Gastrocnemius medialis (tissue), 4 donors: ENCODE measurements at regions of chr14 and their contacts with region 1.

Region 1: DNA sequence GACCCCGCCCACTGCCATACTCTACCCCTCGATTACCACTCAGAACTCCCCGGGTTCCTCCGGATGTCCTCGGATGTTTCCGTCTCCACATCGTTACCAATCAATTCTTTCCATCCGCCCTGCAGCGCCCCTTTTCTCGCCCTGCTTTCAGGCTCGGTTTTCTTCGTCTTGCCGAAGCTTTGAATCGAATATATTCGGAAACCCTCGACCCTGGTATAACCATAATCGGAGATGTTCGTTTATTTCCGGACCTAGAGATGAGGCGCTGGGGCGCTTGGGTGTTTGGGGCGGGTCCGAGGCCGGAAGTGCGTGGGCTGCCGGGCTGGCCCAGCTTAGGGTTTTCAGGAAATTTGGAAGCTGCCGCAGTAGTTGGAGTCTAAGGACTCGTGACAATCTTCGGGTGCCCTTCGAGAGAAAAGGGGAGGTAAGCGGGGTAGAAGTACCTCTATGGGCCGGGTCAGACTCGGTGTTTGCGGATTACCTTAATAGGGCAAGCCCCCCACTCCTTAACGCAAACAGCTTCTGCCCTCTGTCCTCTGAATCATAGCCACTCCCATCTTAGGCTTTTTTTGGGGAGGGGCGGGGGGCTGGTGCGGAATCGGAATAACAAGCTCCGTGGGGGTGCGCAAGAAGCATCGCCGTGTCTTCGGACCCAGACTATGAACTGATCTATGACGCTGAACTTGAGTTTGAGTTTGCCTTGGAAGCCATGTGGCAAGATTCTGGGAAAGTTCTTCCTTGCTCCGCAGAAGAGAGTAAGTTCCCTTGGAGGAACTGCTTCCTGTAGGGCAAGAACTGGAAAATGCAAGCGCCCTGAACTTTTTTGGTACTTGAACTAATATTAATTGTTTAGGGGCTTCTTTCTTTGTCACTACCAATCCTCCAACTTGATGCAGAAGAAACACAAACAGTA is at the start of gene C14orf119:
- DNase-seq: peak; percentile 100
- ATAC-seq: peak; percentile 96 to 97
- H3K4me3 ChIP-seq: peak within 1 kb of the TSS; percentile 73 to 99 (median 82)
- H3K27ac ChIP-seq: peak within 1 kb of the TSS; percentile 91 to 100 (median 96)
- H3K4me1 ChIP-seq: peaks cover 27 to 32% of the 10 kb centered on the region in 2 donors
- H3K27me3 ChIP-seq: no peaks in the 10 kb centered on the region
- CTCF ChIP-seq: peak in 1 of 5 experiments; percentile 4
- POLR2A ChIP-seq: peak; percentile 56 to 69
- total RNA-seq, gene C14orf119: 9.5 to 28.8 (median 13.8) TPM

Region 2: GRCh38 chr14:23034483-23035302 is 60.8 kb before region 1 on chr14 and contains the start of gene PSMB5:
- in situ Hi-C with region 1: no loop called
- intact Hi-C with region 1: loop called (anchors 2 kb)
- DNase-seq: peak; percentile 89 to 93
- ATAC-seq: peak; percentile 98 to 99
- H3K4me3 ChIP-seq: peak within 1 kb of the TSS; percentile 74 to 97 (median 90)
- H3K27ac ChIP-seq: peak within 1 kb of the TSS; percentile 88 to 99 (median 98)
- H3K4me1 ChIP-seq: peaks cover 12 to 22% of the 10 kb centered on the region in 2 donors
- H3K27me3 ChIP-seq: no peaks in the 10 kb centered on the region
- CTCF ChIP-seq: peak in 1 of 5 experiments; percentile 29
- POLR2A ChIP-seq: peak; percentile 81 to 82
- total RNA-seq, gene PSMB5: 304 to 543 (median 486) TPM

Region 3: GRCh38 chr14:23071244-23071974 is 24.0 kb before region 1 on chr14:
- in situ Hi-C with region 1: no loop called
- intact Hi-C with region 1: loop called (anchors 2 kb)
- DNase-seq: peak; percentile 84 to 90
- ATAC-seq: peak; percentile 92 to 93
- H3K4me3 ChIP-seq: peak overlapping the region; percentile 68 to 81 (median 74)
- H3K27ac ChIP-seq: peak overlapping the region; percentile 88 to 95 (median 90)
- H3K4me1 ChIP-seq: peaks cover 25 to 32% of the 10 kb centered on the region in 2 donors
- H3K27me3 ChIP-seq: no peaks in the 10 kb centered on the region
- CTCF ChIP-seq: no peak
- POLR2A ChIP-seq: peak; percentile 63 to 67

Region 4: DNA sequence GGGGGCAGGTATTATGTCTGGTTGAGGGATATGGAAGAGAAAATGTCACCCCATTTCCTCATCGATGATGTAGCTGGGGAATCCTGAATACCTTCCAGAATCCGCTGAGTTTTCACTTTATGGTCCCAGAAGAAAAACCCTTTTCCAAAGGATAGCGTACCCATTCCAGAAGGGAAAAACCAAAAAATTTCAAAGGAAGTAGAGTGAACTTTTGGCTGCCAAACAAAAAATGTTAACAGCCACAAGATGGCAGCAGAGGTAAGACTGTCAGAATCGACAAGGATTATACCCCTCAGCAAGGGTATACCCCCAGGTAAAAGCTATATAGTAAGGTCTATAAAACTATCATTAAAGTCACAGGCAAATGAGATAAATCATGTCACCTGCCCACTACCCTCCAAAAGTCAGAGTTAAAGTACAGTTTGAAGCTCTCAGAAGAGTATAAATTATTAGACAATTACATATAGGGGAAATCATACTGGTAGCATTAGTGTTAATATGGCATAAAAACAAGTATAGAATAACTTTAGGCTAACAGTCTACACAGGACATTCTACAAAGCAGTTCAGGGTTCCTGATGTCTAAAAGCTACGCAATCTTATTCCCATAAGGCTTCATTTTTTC is 18.6 kb before region 1 on chr14:
- in situ Hi-C with region 1: no loop called
- intact Hi-C with region 1: loop called (anchors 2 kb)
- DNase-seq: no peak
- ATAC-seq: peak in 1 of 2 donors; percentile 31
- H3K4me3 ChIP-seq: no peak overlapping the region
- H3K27ac ChIP-seq: peak overlapping the region; percentile 71 to 87 (median 84)
- H3K4me1 ChIP-seq: peaks cover 11 to 33% of the 10 kb centered on the region in 2 donors
- H3K27me3 ChIP-seq: no peaks in the 10 kb centered on the region
- CTCF ChIP-seq: peak; percentile 29 to 70 (median 48)
- POLR2A ChIP-seq: no peak

Region 5: GRCh38 chr14:23141671-23142451 is 46.4 kb after region 1 on chr14:
- in situ Hi-C with region 1: no loop called
- intact Hi-C with region 1: no loop called
- DNase-seq: peak; percentile 46 to 61
- ATAC-seq: peak; percentile 28 to 34
- H3K4me3 ChIP-seq: no peak overlapping the region
- H3K27ac ChIP-seq: peak overlapping the region; percentile 90 to 97 (median 96)
- H3K4me1 ChIP-seq: peaks cover 47 to 48% of the 10 kb centered on the region in 2 donors
- H3K27me3 ChIP-seq: no peaks in the 10 kb centered on the region
- CTCF ChIP-seq: no peak
- POLR2A ChIP-seq: peak in 1 of 2 donors; percentile 33